A549 (cell line): ENCODE measurements at regions of chr1 and their contacts with region 1.

Region 1: DNA sequence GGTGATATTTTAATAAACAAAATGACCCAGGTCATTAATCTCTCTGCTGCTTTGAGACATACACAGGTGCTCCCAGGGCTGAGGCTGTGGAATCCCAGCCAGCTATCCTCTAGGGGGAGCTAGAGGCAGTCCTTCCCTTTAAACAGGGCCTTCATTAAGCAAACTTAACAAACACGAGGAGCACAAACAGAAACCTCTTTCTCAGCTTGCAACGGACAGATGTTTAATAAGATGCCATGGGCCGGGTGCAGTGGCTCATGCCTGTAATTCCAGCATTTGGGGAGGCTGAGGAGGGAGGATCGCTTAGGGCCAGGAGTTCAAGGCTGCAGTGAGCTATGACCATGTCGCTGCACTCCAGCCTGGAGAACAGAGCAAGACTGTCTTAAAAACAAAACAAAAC is 106.7 kb downstream of the HIVEP3 start:
- DNase-seq: peak; percentile 59 to 60
- ATAC-seq: peak in 1 of 2 experiments; percentile 82; a peak in 3 of 6 replicates
- H3K4me3 ChIP-seq: no peak overlapping the region
- H3K27ac ChIP-seq: peak overlapping the region; percentile 63 to 74; a peak in 5 of 6 replicates
- H3K4me1 ChIP-seq: peaks cover 12% of the 10 kb centered on the region; the same call in 1 of the 3 replicates
- CTCF ChIP-seq: peak; percentile 53
- EP300 ChIP-seq: no peak
- POLR2A ChIP-seq: no peak
- RAD21 ChIP-seq: peak; percentile 55 to 64

Region 2: DNA sequence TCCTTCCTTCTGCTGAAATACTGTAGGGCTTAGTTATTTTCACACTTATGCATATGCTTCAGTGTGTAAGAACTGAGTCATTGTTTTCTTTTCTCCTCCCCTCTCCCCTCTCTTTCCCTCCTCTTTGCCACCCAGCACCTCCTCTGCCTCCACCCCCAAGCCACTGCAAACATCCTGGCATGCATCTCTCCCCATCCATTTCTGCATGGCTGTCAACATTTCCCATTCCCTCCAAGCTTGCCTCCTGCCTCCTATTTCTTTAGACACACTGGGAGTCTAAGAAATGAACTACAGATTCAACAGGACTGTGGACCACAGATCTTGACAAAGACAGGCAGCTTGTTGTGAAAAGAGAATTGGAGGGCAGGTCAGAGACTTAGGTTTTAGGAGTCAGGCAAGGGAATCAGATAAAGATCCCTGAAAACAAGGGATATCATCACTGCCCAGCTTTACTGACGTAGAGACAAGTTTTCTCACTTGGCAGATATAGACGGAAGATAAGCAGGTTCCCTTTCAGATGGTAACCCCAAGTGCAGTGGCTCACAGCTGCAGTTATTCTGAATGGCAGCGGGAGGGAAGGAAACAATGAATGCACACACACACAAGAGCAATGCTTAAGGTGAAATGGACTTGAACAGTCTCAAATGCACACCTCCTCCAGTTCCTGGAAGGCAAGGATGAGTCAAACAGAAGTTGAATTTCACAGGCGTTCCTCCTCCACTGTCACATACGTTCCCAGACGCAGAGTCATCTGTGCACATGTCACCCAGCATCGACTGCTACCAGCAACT is 50.5 kb after region 1 on chr1:
- CTCF ChIA-PET with region 1: interaction called, 10 read pairs
- POLR2A ChIA-PET with region 1: interaction called, 9 read pairs
- DNase-seq: peak; percentile 49 to 86
- ATAC-seq: peak; percentile 89 to 90
- H3K4me3 ChIP-seq: peak overlapping the region; percentile 20; the same call in 1 of the 3 replicates
- H3K27ac ChIP-seq: peak overlapping the region; percentile 84 to 87
- H3K4me1 ChIP-seq: peaks cover 49% of the 10 kb centered on the region
- CTCF ChIP-seq: no peak
- EP300 ChIP-seq: peak; percentile 53 to 56; a peak in 2 of 5 replicates
- POLR2A ChIP-seq: no peak
- RAD21 ChIP-seq: no peak; a peak in 1 of 5 replicates